ENCODE measurements at regions of chr1 and their contacts with region 1.

Region 1: GRCh38 chr1:25619101-25619890 is 2.7 kb downstream of the MAN1C1 start:
- DNase-seq: peak; percentile 49 to 73
- H3K4me3 ChIP-seq: no peak overlapping the region
- H3K4me3 Mint-ChIP-seq: peak overlapping the region; percentile 66
- H3K27ac Mint-ChIP-seq: no peak overlapping the region
- H3K4me1 ChIP-seq: peaks cover 4% of the 10 kb centered on the region; the same call in 1 of the 2 replicates
- H3K4me1 Mint-ChIP-seq: peaks cover under 1% of the 10 kb centered on the region
- H3K27me3 ChIP-seq: 0 out of 2 replicates have a peak, but pooled peaks cover 1% of the 10 kb centered on the region
- H3K27me3 Mint-ChIP-seq: no peaks in the 10 kb centered on the region
- CTCF ChIP-seq: peak; percentile 84 to 87

Region 2: DNA sequence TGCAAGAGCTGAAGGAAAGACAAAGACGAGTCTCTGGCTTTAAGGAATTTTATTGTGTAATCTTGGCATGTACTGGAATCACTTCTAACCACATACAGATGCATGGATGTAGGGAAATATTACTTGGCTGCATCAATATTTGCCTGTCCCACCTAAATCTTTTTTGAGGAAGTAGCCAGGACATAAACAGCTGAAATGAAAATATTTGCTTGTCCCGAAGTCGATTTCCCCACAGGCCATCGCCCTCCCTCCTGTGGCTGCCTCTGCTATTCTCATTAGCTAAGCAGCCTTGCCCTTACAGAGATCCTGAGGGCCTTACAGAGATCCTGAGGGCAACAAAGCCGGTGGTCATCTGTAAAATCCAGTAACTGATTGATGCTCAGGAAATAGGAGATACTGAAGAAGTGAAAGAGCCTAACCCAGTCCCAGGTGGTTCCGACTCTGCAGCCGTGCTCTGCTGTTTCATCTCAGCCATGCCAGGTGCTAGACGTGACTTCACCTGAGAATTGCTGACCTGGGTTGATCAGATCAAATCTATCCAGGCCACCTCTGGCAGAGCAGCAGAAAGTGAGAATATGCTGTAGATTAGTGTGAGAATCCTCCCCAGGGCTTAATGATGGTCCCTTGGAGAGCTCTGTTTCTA is 22.8 kb after region 1 on chr1:
- CTCF ChIA-PET with region 1: no interaction called
- POLR2A ChIA-PET with region 1: no interaction called
- intact Hi-C with region 1: no loop called
- DNase-seq: no peak
- H3K4me3 ChIP-seq: no peak overlapping the region
- H3K4me3 Mint-ChIP-seq: no peak overlapping the region
- H3K27ac Mint-ChIP-seq: no peak overlapping the region
- H3K4me1 ChIP-seq: no peaks in the 10 kb centered on the region
- H3K4me1 Mint-ChIP-seq: no peaks in the 10 kb centered on the region
- H3K27me3 ChIP-seq: no peaks in the 10 kb centered on the region
- H3K27me3 Mint-ChIP-seq: no peaks in the 10 kb centered on the region
- CTCF ChIP-seq: no peak

Region 3: DNA sequence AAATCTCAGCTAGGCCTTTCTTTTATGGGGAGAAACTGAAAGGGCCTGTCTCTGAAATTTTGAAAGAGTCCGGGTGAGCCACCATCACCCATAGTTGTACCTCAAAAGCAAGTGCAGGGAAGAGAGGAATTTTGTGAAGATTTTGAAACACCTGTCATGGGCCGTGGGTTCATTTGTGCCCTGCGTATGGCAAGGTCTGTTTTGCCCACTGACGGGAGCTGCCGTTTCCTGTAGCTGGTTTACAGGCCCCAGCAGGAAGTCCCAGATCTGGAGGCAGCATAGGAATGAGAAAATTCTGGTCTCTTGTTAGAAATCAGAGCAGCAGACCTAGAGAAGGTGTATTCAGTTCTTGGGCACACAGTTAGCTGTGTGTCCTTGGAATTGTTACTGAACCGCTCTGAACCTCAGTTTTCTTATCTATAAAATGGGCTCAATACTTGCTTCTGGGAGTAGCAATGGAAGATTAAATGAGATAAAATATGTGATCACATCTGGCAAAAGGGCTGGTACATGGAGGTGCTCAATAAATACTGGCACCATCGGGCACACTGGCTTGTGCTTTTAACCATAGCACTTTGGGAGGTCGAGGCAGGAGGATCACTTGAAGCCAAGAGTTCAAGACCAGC is 49.8 kb after region 1 on chr1:
- CTCF ChIA-PET with region 1: no interaction called
- POLR2A ChIA-PET with region 1: no interaction called
- intact Hi-C with region 1: loop called (anchors 2 kb)
- DNase-seq: no peak
- H3K4me3 ChIP-seq: no peak overlapping the region
- H3K4me3 Mint-ChIP-seq: no peak overlapping the region
- H3K27ac Mint-ChIP-seq: peak overlapping the region; percentile 91
- H3K4me1 ChIP-seq: peaks cover 36% of the 10 kb centered on the region
- H3K4me1 Mint-ChIP-seq: peaks cover 27% of the 10 kb centered on the region
- H3K27me3 ChIP-seq: no peaks in the 10 kb centered on the region
- H3K27me3 Mint-ChIP-seq: no peaks in the 10 kb centered on the region
- CTCF ChIP-seq: no peak

Region 4: GRCh38 chr1:25695090-25695770 is 75.9 kb after region 1 on chr1:
- CTCF ChIA-PET with region 1: interaction called, 5 read pairs
- POLR2A ChIA-PET with region 1: no interaction called
- intact Hi-C with region 1: loop called (anchors 1 kb)
- DNase-seq: peak; percentile 78 to 84
- H3K4me3 ChIP-seq: no peak overlapping the region
- H3K4me3 Mint-ChIP-seq: no peak overlapping the region
- H3K27ac Mint-ChIP-seq: peak overlapping the region; percentile 74
- H3K4me1 ChIP-seq: no peaks in the 10 kb centered on the region
- H3K4me1 Mint-ChIP-seq: peaks cover 7% of the 10 kb centered on the region
- H3K27me3 ChIP-seq: no peaks in the 10 kb centered on the region
- H3K27me3 Mint-ChIP-seq: no peaks in the 10 kb centered on the region
- CTCF ChIP-seq: peak in 1 of 2 experiments; percentile 55

Measured in Caco-2 (cell line).